Activated CD4-positive, alpha-beta T cell treated with anti-CD3 and anti-CD28 coated beads for 36 hours (primary cell): ENCODE measurements at regions of chr11 and their contacts with region 1.

Region 1: DNA sequence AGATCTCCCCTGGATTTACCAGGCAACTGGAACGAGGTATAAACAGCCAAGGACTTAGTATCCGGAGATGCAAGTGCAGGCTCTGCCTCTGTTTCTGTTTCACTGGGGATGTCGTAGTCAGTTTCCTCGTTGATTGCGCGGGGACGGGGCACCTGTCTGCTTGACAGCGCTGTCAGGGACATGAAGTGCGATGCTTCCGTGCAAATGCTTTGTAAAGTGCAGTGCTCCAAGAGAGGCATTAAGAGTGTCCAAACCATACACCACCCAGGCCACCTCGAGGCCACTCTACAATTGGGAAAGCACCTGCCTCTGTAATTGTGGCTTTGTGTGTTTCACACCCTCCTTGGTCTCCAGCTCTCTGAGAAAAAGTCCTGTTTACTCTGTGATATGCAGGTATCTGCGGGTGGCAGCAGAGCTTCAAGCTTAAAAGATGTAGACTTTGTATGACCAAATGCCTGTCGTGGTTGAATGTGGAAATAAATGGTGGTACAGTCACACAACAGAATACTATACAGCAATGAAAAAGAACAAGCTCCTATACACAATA is 18.6 kb upstream of the CD5 start:
- DNase-seq: peak; percentile 86
- ATAC-seq: peak; percentile 66
- H3K4me3 Mint-ChIP-seq: peak overlapping the region; percentile 87
- H3K27ac Mint-ChIP-seq: peak overlapping the region; percentile 99
- H3K4me1 Mint-ChIP-seq: peaks cover 64% of the 10 kb centered on the region
- H3K27me3 Mint-ChIP-seq: no peaks in the 10 kb centered on the region

Region 2: DNA sequence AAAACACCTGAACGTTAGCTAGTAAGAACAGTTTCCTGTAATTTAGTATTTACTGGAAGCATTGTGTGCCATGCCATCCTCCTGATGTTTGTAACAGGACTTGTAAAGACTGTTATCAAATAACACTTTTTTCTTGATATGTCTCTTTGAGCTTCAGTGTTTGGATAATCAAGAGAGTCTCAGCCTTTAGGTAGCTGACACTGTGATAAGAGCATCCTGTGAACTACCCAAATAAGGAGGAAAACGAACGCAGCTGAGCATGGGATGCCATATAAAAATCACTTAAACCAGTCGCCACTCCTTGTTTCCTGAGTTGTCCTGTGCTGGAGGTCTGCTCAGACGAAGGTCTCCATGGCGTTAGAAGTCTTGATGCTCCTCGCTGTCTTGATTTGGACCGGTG is 1043.6 kb before region 1 on chr11 and contains the start of gene OOSP2:
- CTCF ChIA-PET with region 1: no interaction called
- POLR2A ChIA-PET with region 1: no interaction called
- intact Hi-C with region 1: no loop called
- DNase-seq: no peak
- ATAC-seq: no peak
- H3K4me3 Mint-ChIP-seq: no peak within 1 kb of the TSS
- H3K27ac Mint-ChIP-seq: no peak within 1 kb of the TSS
- H3K4me1 Mint-ChIP-seq: no peaks in the 10 kb centered on the region
- H3K27me3 Mint-ChIP-seq: peaks cover 5% of the 10 kb centered on the region
- total RNA-seq, gene OOSP2: not detected

Region 3: GRCh38 chr11:61021661-61022212 is 61.9 kb before region 1 on chr11:
- CTCF ChIA-PET with region 1: no interaction called
- POLR2A ChIA-PET with region 1: interaction called, 4 read pairs
- intact Hi-C with region 1: loop called in 1 of 2 experiments (anchors 2 kb)
- DNase-seq: peak; percentile 94
- ATAC-seq: peak; percentile 50
- H3K4me3 Mint-ChIP-seq: peak overlapping the region; percentile 79
- H3K27ac Mint-ChIP-seq: peak overlapping the region; percentile 97
- H3K4me1 Mint-ChIP-seq: peaks cover 92% of the 10 kb centered on the region
- H3K27me3 Mint-ChIP-seq: no peaks in the 10 kb centered on the region

Region 4: GRCh38 chr11:61071208-61071681 is 12.4 kb before region 1 on chr11:
- CTCF ChIA-PET with region 1: interaction called, 64 read pairs
- POLR2A ChIA-PET with region 1: interaction called, 16 read pairs
- intact Hi-C with region 1: no loop called
- DNase-seq: peak; percentile 78
- ATAC-seq: peak; percentile 87
- H3K4me3 Mint-ChIP-seq: peak overlapping the region; percentile 59
- H3K27ac Mint-ChIP-seq: peak overlapping the region; percentile 93
- H3K4me1 Mint-ChIP-seq: peaks cover 95% of the 10 kb centered on the region
- H3K27me3 Mint-ChIP-seq: no peaks in the 10 kb centered on the region

Region 5: DNA sequence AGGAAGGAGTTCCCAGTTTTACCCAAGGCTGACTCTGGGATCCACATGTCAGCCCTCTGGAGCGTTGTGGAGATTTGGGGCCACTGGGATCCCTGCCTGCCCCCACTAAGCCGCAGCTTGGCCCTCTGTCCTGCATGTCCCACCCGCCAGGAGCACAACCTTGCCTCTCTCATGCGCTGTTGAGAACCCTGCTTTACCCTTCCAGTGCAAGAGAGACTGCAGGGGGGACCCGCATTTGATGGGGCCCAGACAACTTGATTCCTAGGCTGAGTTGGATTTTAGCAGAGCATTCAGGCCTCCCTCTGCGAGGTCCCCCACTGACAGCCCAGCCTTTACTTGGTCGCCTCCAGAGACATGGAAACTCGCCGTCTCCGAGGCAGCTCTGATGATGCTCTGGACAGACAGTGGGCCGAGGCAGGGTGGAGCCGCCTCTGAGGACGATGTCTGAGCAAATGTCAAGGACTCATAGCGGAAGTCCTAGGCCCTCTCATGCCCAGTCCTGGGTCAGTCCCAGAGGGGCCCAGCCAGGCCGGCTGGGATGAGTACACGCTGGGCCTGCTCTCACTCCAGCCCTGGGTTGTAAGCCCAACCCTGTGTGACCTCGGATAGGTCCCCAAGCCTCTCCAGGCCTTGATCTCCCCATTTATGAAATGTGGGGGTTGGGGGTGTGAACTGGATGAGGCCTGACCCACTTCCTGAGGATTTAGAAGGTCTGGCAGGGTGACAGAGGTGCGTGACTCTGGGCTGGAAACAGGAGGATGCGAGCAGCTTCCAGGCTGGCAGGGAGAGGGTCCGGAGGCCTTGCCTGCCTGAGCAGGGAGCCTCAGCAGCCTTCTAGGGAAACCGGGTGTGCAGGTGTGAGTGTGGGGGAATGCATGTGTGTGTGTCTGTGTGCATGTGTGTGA is 19.2 kb after region 1 on chr11:
- CTCF ChIA-PET with region 1: interaction called, 8 read pairs
- POLR2A ChIA-PET with region 1: interaction called, 6 read pairs
- intact Hi-C with region 1: loop called in 1 of 2 experiments (anchors 2 kb)
- DNase-seq: peak; percentile 49
- ATAC-seq: peak; percentile 16
- H3K4me3 Mint-ChIP-seq: no peak overlapping the region
- H3K27ac Mint-ChIP-seq: no peak overlapping the region
- H3K4me1 Mint-ChIP-seq: peaks cover 25% of the 10 kb centered on the region
- H3K27me3 Mint-ChIP-seq: no peaks in the 10 kb centered on the region

Region 6: GRCh38 chr11:61129639-61130523 is 46.2 kb after region 1 on chr11:
- CTCF ChIA-PET with region 1: interaction called, 7 read pairs
- POLR2A ChIA-PET with region 1: interaction called, 7 read pairs
- intact Hi-C with region 1: loop called (anchors 2 kb)
- DNase-seq: peak; percentile 97
- ATAC-seq: peak; percentile 89
- H3K4me3 Mint-ChIP-seq: peak overlapping the region; percentile 14
- H3K27ac Mint-ChIP-seq: peak overlapping the region; percentile 64
- H3K4me1 Mint-ChIP-seq: peaks cover 27% of the 10 kb centered on the region
- H3K27me3 Mint-ChIP-seq: no peaks in the 10 kb centered on the region